Right ventricle myocardium superior (tissue), 1 donor: ENCODE measurements at regions of chr10 and their contacts with region 1.

Region 1: DNA sequence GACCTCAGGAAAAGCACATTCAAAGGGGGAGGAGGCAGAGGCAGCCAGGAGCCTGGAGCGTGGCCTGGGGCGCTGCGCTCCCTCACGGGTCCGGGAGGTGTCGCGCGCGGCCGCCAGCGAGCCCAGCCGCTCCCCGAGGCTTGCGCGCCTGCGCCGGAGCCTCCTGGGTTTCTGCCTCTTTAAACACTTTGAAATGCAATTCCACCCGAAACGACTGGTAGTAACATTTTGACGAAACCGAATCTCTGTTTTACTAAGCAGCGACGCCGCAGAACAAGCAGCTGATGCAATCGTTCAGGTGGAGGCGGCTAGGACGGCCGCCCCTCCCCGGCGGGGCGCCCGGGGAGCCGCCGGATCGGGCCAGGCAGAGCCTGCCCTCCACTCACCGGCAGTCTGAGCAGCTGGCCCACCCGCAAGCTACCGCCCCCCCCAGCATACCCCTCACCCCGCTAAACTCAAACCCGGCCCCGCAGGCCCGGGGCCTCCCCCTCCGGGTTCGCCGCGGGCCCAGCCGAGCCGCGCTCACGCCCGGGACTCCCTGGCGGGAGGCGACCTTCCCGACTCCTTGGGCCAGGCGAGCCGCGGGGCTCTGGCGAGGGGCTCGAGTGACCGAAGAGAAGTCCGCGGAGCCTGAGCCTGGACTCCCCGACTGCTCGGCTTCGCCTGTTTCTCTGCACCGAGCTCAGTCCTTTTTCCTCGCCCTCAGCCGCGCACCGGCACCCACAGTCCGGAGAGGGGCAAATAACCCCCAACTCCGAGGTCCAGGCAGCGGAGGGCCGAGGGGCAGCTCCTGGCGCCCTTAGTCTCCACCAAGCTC is 3.2 kb downstream of the MKX start:
- DNase-seq: peak; percentile 87
- ATAC-seq: peak; percentile 97

Region 2: DNA sequence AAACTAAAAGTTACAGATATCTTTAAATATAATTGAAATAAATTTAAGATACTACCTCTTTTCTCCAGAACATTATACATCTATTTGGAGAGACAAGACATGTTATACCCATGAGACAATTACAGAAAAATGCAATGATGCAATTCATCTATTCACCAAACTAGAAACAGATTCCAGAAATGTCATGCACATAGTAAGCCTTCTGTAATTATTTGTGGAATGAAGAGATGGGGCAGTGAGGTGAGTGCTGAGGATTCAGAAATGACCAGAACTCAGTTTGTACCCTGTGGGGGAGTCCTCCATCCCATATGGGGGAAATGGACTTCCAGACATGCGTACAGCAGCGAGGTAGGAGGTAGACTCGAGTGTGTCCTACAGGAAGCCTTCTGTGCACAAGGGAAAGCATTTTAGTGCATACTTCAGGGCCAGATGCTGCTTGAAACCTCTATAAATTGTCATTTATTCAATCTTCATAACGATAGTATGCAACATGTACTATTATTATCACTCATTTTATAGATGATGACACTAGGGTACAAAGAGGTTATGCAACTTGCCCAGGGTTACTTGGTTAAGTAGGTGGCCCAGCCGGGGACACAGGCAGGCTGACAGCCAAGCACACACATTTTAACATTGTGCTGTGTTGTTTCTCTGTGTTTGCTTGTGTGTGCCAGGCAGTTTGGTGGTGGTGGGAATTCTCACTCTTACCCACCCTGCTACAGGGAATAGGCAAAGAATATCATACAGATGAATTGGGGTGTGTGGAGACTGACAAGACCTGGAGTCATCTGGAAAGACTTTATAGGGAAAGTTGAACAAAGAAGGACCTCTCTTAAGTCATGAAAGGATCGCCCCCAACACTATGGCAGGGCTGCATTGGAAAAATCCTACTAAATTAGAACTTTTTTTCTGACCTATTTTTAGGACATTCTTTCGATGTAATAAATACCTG is 95.9 kb before region 1 on chr10:
- intact Hi-C with region 1: no loop called
- DNase-seq: no peak
- ATAC-seq: no peak

Region 3: GRCh38 chr10:28180654-28181053 is 438.3 kb after region 1 on chr10:
- intact Hi-C with region 1: loop called (anchors 10 kb)
- DNase-seq: no peak
- ATAC-seq: no peak